A549 (cell line): ENCODE measurements at regions of chr17 and their contacts with region 1.

Region 1: DNA sequence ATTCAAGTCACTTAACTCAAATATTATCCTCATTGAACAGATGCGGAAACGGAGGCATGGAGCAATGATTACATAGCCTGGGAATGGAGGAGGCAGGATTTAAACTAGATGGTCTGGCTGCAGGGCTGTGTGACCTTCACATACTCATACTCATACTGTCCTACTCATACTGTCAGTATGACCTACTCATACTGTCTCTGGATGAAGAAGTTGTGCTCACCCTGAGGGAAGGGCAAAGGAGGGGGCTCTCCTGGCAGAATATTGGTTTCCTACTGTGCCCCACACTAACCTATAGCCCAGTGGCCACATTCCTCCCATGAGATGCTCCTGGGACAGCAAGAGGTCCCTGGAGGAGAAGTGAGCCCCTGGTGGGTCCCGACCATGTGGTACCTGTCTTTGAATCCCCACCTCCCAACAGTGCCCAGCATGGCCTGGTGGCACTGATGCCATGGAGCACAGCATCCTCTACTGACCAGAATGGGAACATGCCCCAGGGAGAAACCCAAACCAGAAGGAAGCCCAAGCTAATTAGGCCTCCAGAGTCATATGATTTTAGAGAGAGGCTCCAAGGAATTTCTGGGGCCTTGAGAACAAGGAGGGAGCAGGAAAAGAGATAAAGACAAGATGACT is 197.3 kb upstream of the SDK2 start:
- DNase-seq: peak; percentile 54 to 60
- ATAC-seq: peak; percentile 70 to 90
- H3K4me3 ChIP-seq: no peak overlapping the region
- H3K27ac ChIP-seq: peak overlapping the region in 1 of 2 experiments; percentile 37; a peak in 1 of 6 replicates
- H3K4me1 ChIP-seq: peaks cover 6% of the 10 kb centered on the region; the same call in 1 of the 3 replicates
- CTCF ChIP-seq: peak; percentile 78
- EP300 ChIP-seq: no peak
- POLR2A ChIP-seq: no peak
- RAD21 ChIP-seq: peak; percentile 92 to 96

Region 2: GRCh38 chr17:73658821-73659515 is 182.6 kb before region 1 on chr17:
- CTCF ChIA-PET with region 1: interaction called, 10 read pairs
- POLR2A ChIA-PET with region 1: no interaction called
- DNase-seq: no peak
- ATAC-seq: no peak
- H3K4me3 ChIP-seq: no peak overlapping the region
- H3K27ac ChIP-seq: no peak overlapping the region
- H3K4me1 ChIP-seq: peaks cover 8% of the 10 kb centered on the region; the same call in 1 of the 3 replicates
- CTCF ChIP-seq: no peak
- EP300 ChIP-seq: no peak
- POLR2A ChIP-seq: no peak
- RAD21 ChIP-seq: no peak

Region 3: DNA sequence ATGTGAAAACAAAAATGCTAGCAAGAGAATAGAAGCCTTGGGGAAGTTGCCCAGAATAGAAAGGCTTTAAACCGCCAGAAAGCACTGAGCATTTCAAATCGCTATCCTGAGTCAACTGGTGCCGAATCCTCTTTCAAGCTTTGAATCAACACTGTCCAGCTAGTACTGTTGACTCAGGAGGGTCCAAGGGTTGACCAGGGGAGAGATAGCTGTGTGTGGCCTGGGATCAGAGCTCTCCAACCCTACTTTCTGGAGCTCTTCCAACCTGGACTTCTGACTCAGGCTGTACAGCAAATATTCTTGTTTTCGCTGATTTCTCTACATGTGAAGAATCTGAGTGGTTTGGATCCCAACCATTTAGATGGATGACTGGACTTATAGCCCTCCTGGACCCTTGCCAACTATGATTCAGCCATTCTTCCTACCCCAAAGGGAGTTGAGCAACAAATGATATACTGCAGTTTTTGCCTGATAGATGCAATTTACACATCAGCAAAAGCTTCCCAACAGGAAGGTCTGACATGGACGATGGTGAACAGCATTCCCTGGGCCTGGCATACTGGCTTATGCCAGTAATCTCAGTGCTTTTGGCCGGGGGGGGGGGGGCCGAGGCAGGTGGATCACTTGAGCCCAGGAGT is 43.3 kb before region 1 on chr17:
- CTCF ChIA-PET with region 1: interaction called, 16 read pairs
- POLR2A ChIA-PET with region 1: interaction called, 5 read pairs
- DNase-seq: peak; percentile 98 to 100
- ATAC-seq: peak; percentile 91 to 97
- H3K4me3 ChIP-seq: no peak overlapping the region
- H3K27ac ChIP-seq: peak overlapping the region; percentile 92 to 93
- H3K4me1 ChIP-seq: peaks cover 75% of the 10 kb centered on the region
- CTCF ChIP-seq: no peak
- EP300 ChIP-seq: peak; percentile 94
- POLR2A ChIP-seq: no peak
- RAD21 ChIP-seq: peak; percentile 34 to 72

Region 4: DNA sequence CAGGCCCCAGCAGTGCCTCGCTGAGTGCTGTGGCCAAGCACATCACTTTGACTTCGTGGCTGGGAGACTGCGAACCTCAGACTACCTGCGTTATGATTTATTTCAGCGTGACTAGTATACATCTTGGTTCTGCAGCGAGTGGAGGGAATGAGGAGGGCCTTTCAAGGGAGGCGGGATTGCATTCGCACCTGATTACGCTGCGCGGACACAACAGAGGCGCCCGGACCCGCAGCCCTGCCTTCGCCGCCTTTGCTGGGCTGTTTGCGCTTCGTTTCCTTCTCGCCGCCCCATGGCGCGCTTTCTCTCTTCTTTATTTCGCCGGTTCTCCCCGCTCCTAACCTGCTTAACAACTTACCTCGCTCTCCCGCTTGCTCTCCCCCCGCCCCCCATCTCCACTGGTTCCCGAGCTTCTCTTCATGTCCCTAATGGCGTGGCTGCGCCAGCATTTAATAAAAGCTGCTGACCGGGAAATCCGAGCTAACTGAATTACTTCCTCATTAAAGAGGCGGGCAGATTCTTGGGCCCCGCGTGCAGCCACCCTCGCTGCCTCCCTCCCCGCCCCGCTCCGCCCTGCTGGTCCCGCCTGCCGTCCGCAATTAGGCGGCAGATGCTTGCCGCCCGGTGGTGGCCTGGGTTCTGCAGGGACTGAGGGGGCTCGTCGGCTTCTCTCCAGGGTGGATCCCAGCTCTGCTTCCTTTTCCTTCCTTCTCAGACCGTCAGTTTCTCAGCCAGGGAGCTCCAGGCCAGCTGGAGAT is 60.3 kb after region 1 on chr17:
- CTCF ChIA-PET with region 1: no interaction called
- POLR2A ChIA-PET with region 1: no interaction called
- DNase-seq: no peak
- ATAC-seq: no peak
- H3K4me3 ChIP-seq: no peak overlapping the region
- H3K27ac ChIP-seq: no peak overlapping the region
- H3K4me1 ChIP-seq: no peaks in the 10 kb centered on the region
- CTCF ChIP-seq: no peak
- EP300 ChIP-seq: no peak
- POLR2A ChIP-seq: no peak
- RAD21 ChIP-seq: no peak

Region 5: DNA sequence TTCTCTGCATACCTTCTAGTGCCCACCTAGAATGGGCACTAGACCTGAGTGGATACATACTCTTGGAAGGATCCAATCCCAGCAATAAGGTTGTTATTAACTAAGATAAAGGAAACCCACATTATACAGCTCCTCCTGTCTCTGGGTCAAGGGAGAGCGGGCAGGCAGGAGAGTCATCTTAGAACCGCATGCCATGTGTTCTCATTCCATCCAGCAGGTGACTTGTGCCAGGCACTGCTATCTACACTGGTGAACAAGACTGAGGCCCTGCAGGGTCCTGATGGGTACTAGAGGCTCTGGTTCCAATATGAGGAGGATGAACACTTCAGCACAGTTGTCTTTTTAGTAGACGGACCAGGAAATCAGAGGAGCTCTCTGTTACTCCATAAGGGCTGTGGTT is 731.6 kb after region 1 on chr17:
- CTCF ChIA-PET with region 1: no interaction called
- POLR2A ChIA-PET with region 1: no interaction called
- DNase-seq: peak in 1 of 2 experiments; percentile 46
- ATAC-seq: peak; percentile 9 to 32; a peak in 2 of 6 replicates
- H3K4me3 ChIP-seq: no peak overlapping the region
- H3K27ac ChIP-seq: no peak overlapping the region; a peak in 1 of 6 replicates
- H3K4me1 ChIP-seq: peaks cover 24% of the 10 kb centered on the region
- CTCF ChIP-seq: no peak
- EP300 ChIP-seq: no peak
- POLR2A ChIP-seq: no peak
- RAD21 ChIP-seq: no peak